ENCODE measurements at regions of chr12 and their contacts with region 1.

Region 1: GRCh38 chr12:51683726-51684357 is 92.8 kb downstream of the SCN8A start:
- DNase-seq: peak; percentile 91
- H3K4me3 ChIP-seq: peak overlapping the region in 1 of 3 experiments; percentile 13
- H3K27ac ChIP-seq: peak overlapping the region; percentile 55
- H3K4me1 ChIP-seq: peaks cover 46% of the 10 kb centered on the region
- H3K27me3 ChIP-seq: no peaks in the 10 kb centered on the region
- CTCF ChIP-seq: no peak
- POLR2A ChIP-seq: no peak

Region 2: DNA sequence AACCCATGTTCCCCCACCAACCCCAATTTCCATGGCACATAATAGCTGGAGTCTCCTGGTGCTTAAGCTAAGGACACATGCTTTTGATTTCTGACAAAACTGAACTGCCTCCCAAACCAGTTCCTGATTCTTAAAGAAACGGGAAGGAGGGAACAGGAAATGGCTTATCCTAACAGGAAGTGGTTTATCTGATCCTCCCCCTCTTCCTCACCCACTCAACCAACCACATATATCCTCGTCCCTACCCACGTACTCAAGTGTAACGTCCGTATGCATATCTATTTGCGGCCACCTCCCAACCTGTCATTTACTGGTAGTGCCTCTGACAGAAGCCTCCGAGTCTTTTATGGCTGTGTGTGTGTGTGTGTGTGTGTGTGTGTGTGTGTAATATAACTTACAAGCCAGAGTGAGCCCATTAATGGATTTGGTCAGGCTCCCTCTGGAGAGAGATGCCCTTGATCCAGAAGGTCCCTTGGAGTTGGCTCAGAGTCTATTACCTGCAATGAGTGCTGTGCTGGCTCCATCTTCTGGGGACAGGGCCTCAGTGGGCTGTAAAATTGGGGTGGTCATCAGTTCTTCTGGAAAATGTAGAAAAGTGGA is 437.5 kb before region 1 on chr12:
- CTCF ChIA-PET with region 1: no interaction called
- POLR2A ChIA-PET with region 1: no interaction called
- dilution Hi-C with region 1: no loop called
- intact Hi-C with region 1: no loop called
- DNase-seq: peak; percentile 49
- H3K4me3 ChIP-seq: no peak overlapping the region
- H3K27ac ChIP-seq: peak overlapping the region; percentile 10
- H3K4me1 ChIP-seq: peaks cover 22% of the 10 kb centered on the region
- H3K27me3 ChIP-seq: no peaks in the 10 kb centered on the region
- CTCF ChIP-seq: peak in 1 of 2 donors; percentile 4
- POLR2A ChIP-seq: no peak

Region 3: DNA sequence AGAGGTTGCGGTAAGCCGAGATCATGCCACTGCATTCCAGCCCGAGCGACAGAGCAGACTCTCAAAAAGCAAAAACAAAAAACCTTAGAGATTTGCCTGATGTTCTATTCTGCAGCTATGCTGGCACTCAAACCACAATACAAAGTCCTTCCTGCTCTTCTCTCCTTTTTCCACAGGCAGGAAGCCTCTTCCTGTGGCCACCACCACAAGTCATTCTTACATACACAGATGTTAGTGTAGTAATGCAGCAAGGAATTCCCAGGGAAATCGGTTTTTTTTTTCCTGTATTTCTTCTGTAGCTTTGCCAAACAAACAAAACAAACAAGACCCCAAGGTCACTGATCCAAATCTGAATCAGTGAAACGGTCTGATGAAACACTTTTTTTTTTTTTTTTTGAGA is 60.4 kb after region 1 on chr12:
- CTCF ChIA-PET with region 1: interaction called, 3 read pairs
- POLR2A ChIA-PET with region 1: no interaction called
- dilution Hi-C with region 1: no loop called
- intact Hi-C with region 1: loop called (anchors 1 kb)
- DNase-seq: peak; percentile 91
- H3K4me3 ChIP-seq: no peak overlapping the region
- H3K27ac ChIP-seq: peak overlapping the region; percentile 77
- H3K4me1 ChIP-seq: peaks cover 20% of the 10 kb centered on the region
- H3K27me3 ChIP-seq: no peaks in the 10 kb centered on the region
- CTCF ChIP-seq: no peak
- POLR2A ChIP-seq: no peak

Region 4: GRCh38 chr12:51752234-51752889 is 68.5 kb after region 1 on chr12:
- CTCF ChIA-PET with region 1: no interaction called
- POLR2A ChIA-PET with region 1: no interaction called
- dilution Hi-C with region 1: no loop called
- intact Hi-C with region 1: loop called (anchors 2 kb)
- DNase-seq: peak; percentile 93
- H3K4me3 ChIP-seq: no peak overlapping the region
- H3K27ac ChIP-seq: no peak overlapping the region
- H3K4me1 ChIP-seq: peaks cover 27% of the 10 kb centered on the region
- H3K27me3 ChIP-seq: no peaks in the 10 kb centered on the region
- CTCF ChIP-seq: no peak
- POLR2A ChIP-seq: no peak